H1 (cell line): ENCODE measurements at regions of chr17 and their contacts with region 1.

Region 1: DNA sequence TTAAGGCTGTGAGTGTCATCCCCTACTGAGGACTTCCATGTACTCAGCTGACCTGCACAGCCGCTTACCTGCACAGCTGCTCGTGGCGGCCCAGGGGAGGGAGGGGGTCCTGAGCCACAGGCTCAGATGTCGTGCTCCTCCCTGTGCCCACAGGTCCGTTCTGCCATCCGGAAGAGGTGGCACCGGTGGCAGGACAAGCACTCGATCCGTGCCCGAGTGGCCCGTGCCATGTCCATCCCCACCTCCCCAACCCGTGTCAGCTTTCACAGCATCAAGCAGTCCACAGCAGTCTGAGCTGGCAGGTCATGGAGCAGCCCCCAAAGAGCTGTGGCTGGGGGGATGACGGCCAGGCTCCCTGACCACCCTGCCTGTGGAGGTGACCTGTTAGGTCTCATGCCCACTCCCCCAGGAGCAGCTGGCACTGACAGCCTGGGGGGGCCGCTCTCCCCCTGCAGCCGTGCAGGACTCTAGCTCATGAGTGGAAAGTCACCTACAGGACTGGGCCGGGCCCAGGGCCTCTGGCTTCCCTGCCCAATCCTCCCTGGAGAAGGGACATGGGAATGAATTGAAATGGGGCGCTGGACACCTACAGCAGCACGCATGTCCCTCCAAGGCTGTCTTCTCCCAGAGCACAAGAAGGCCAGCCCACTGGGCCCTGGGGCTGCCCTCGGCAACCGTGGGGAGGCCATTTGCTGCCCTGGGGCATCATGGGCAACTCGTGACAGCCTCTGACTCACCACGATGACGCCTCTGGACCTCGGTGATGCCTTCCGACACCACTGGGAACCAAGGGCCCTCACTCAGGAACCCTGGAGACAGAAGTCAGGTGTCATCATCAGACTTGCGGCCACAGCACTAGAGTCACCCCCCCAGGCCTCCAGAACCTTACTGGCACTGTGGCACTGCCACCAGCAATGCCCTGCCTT is 9.9 kb upstream of the SPPL2C start:
- DNase-seq: no peak
- H3K4me3 ChIP-seq: no peak overlapping the region
- H3K27ac ChIP-seq: no peak overlapping the region
- H3K4me1 ChIP-seq: peaks cover 0 to 2% (median 2%) of the 10 kb centered on the region in 4 experiments; a peak in 2 of 7 replicates
- H3K27me3 ChIP-seq: no peaks in the 10 kb centered on the region
- CTCF ChIP-seq: no peak
- EP300 ChIP-seq: no peak
- POLR2A ChIP-seq: no peak
- RAD21 ChIP-seq: no peak

Region 2: DNA sequence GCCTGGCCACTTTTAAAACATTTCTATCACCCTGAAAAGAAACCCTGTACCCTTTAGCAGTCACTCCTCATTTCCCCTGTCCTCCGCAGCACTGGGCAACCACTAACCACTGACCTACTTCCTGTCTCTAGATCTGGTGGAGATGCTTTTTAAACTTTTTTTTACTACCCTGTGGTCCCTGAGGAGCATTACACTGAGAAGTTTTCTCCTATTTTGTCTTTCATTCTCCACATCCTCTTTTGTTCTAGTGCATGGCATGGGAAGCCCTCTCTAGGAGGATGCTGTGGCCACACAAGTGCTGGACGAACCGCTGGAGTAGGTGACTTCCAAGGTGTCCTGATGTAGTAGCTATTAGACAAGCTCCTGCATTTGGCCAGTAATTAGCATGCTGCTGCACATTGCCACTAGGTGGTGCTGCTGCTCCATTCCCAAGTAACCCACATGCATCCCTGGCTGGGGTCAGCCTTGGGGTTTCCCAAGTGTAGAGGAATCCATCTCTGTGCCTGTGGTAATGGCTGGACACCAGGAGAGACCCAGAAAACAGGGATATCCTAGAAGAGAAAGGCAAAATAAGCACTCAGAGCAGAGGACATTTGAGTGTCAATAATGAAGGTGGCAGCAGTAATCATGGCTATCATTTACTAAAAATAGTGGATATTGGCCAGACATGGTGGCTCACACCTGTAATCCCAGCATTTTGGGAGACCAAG is 194.4 kb before region 1 on chr17:
- CTCF ChIA-PET with region 1: interaction called, 45 read pairs
- POLR2A ChIA-PET with region 1: interaction called, 3 read pairs
- DNase-seq: peak; percentile 57 to 89
- H3K4me3 ChIP-seq: no peak overlapping the region
- H3K27ac ChIP-seq: no peak overlapping the region
- H3K4me1 ChIP-seq: no peaks in the 10 kb centered on the region; a peak in 1 of 7 replicates
- H3K27me3 ChIP-seq: no peaks in the 10 kb centered on the region
- CTCF ChIP-seq: peak; percentile 93 to 99 (median 94)
- EP300 ChIP-seq: no peak
- POLR2A ChIP-seq: no peak
- RAD21 ChIP-seq: peak; percentile 97 to 98

Region 3: GRCh38 chr17:45823598-45823997 is 11.1 kb before region 1 on chr17:
- CTCF ChIA-PET with region 1: interaction called, 38 read pairs
- POLR2A ChIA-PET with region 1: interaction called, 4 read pairs
- DNase-seq: no peak
- H3K4me3 ChIP-seq: no peak overlapping the region
- H3K27ac ChIP-seq: no peak overlapping the region
- H3K4me1 ChIP-seq: peaks cover 0 to 3% (median 0%) of the 10 kb centered on the region in 4 experiments; a peak in 1 of 7 replicates
- H3K27me3 ChIP-seq: no peaks in the 10 kb centered on the region; a peak in 1 of 7 replicates
- CTCF ChIP-seq: no peak
- EP300 ChIP-seq: no peak
- POLR2A ChIP-seq: no peak
- RAD21 ChIP-seq: no peak